Activated naive CD4-positive, alpha-beta T cell treated with anti-CD3 and anti-CD28 coated beads, Interleukin-2, amount 10 ng/mL, durations not matched to agents 7 days and 5 days (primary cell): ENCODE measurements at regions of chr1 and their contacts with region 1.

Region 1: GRCh38 chr1:101357444-101357986 is 120.7 kb downstream of the S1PR1 start:
- DNase-seq: peak; percentile 78
- H3K4me3 Mint-ChIP-seq: no peak overlapping the region
- H3K27ac Mint-ChIP-seq: peak overlapping the region; percentile 37
- H3K4me1 Mint-ChIP-seq: peaks cover 16% of the 10 kb centered on the region
- H3K27me3 Mint-ChIP-seq: peaks cover 7% of the 10 kb centered on the region

Region 2: GRCh38 chr1:101221945-101222429 is 135.5 kb before region 1 on chr1:
- CTCF ChIA-PET with region 1: no interaction called
- DNase-seq: no peak
- H3K4me3 Mint-ChIP-seq: no peak overlapping the region
- H3K27ac Mint-ChIP-seq: peak overlapping the region; percentile 82
- H3K4me1 Mint-ChIP-seq: peaks cover 22% of the 10 kb centered on the region
- H3K27me3 Mint-ChIP-seq: no peaks in the 10 kb centered on the region

Region 3: GRCh38 chr1:101323535-101323934 is 34.0 kb before region 1 on chr1:
- CTCF ChIA-PET with region 1: interaction called, 16 read pairs
- DNase-seq: no peak
- H3K4me3 Mint-ChIP-seq: no peak overlapping the region
- H3K27ac Mint-ChIP-seq: no peak overlapping the region
- H3K4me1 Mint-ChIP-seq: no peaks in the 10 kb centered on the region
- H3K27me3 Mint-ChIP-seq: peaks cover 14% of the 10 kb centered on the region

Region 4: DNA sequence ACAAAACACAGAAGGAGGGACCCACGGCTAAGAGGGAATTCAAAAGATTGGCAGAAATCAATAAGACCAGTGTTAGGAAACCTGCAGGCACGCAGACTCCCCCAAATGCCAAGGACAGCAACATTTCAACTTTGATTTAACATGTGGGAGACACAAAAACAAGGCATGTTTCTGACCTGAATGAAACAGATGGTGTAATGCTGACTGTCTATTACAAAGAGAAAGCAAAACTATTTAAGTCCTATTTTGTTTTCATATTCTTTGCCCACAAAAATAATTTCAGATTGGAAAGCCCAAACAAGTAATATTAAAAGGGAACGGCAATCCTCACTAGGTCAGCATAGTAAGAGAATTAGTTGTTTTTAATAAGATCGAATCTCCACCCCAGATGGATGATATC is 12.8 kb before region 1 on chr1:
- CTCF ChIA-PET with region 1: interaction called, 21 read pairs
- DNase-seq: no peak
- H3K4me3 Mint-ChIP-seq: no peak overlapping the region
- H3K27ac Mint-ChIP-seq: peak overlapping the region; percentile 5
- H3K4me1 Mint-ChIP-seq: peaks cover 44% of the 10 kb centered on the region
- H3K27me3 Mint-ChIP-seq: peaks cover 4% of the 10 kb centered on the region

Region 5: DNA sequence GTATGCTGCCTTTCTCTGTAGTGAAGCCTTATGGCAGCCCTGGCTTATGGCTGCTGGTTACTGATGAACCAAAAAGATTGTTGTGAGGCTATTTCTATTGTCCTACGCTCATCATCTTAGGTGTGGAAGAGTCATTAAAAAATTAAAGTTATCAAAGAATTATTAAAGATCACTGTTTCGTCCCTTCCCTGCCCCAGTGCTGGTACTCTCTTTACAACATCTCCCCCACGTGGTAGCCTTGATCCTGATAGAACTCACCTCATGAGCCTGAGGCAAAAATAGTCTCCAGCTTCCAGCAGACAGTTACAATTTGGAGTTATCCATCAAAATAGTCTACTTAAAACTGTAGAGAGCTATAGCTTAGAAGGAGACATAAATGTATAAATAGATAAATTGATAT is 80.8 kb after region 1 on chr1:
- CTCF ChIA-PET with region 1: interaction called, 20 read pairs
- DNase-seq: no peak
- H3K4me3 Mint-ChIP-seq: no peak overlapping the region
- H3K27ac Mint-ChIP-seq: no peak overlapping the region
- H3K4me1 Mint-ChIP-seq: no peaks in the 10 kb centered on the region
- H3K27me3 Mint-ChIP-seq: peaks cover 22% of the 10 kb centered on the region

Region 6: GRCh38 chr1:101618900-101619299 is 261.4 kb after region 1 on chr1:
- CTCF ChIA-PET with region 1: no interaction called
- DNase-seq: no peak
- H3K4me3 Mint-ChIP-seq: no peak overlapping the region
- H3K27ac Mint-ChIP-seq: no peak overlapping the region
- H3K4me1 Mint-ChIP-seq: no peaks in the 10 kb centered on the region
- H3K27me3 Mint-ChIP-seq: no peaks in the 10 kb centered on the region